Posterior vena cava (tissue), 2 donors: ENCODE measurements at regions of chr11 and their contacts with region 1.

Region 1: DNA sequence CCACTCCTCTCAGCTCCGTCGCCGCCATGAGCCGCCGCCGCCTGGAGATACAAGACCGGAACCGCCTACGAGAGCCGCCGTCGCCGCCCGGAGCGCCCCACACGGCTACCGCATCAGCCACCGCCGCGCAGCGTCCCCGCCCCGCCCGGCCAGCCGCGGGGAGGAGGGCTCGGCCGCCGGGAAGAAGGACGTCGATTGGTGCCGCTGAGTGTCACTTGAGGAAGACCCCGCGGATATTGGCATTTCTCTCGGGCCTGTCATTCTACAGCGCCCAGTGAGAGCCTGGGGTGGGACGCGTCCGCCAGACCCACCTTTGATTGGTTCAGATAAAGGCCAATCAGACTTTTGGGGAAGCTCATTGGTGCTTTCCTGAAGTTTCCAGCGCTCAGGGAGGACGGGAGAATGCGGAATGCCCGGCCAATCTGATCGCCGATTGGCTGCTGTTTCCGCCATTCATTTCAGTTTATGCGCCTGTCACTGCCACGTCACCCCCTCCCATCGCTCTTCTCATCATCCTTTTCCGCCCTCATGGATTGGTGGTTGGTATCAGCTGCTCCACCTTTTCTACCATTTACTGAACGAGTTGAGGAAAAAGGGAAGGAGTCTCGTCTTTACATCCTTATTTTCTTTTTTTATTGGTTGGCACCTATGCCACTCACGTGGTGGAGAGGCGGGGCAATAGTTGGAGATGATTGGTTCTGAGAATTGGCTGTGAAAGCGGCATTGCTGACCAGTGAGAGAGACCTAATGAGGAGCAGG is at the start of gene OSBP:
- DNase-seq: peak; percentile 99
- total RNA-seq, gene OSBP: 29.7 to 35.7 TPM

Region 2: DNA sequence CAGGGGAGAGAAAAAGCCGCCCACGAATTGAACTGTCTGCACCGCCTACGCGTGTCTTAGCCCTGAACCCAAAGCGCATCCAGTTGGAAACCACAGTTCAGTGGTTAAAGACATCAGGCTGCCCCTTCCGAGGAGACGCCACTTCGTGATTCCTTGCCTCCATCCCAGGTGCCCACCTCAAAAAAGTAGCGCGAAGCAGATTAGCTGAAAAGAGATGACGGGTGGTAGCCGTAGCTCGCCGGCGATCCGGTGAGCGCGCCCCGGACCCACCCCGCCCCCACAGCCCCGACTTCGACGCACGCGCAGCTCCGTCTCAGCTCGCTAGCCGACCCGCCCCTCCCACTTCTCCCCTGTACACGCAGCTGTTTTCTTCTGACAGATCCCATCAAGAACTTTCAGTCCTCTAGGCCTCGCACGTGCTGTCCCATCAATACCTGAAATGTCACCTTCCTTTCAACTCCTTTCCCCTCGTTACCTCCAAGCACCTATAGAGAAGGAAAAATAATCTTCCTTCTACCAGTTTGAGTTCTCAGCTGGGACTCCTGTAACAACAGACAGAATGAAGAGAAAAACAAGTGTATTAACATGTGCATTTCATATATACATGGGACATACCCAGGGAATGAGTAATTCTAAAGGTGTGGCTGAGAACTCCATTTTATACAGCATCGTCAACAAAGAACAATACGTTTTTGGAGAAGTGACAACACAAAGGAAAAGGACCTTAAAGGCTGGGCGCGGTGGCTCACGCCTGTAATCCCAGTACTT is 54.9 kb before region 1 on chr11:
- intact Hi-C with region 1: loop called in 1 of 2 experiments (anchors 10 kb)
- DNase-seq: peak; percentile 94

Region 3: DNA sequence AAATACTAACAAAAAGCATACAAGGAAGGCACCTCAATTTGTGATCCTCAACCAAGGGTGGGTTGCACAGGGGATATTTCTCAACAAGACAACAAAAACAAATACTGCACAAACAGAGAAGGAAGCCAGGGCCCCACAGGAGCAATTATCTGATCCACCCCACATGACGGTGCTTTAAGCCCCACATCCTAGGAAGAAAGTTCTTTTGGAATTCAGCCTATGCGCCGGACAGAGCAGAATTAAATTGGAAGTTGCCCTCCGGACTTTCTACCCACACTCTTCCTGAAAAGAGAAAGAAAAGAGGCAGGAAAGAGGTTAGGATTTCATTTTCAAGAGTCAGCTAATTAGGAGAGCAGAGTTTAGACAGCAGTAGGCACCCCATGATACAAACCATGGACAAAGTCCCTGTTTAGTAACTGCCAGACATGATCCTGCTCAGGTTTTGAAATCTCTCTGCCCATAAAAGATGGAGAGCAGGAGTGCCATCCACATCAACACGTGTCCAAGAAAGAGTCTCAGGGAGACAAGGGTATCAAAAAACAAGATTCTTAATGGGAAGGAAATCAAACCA is 40.8 kb before region 1 on chr11:
- intact Hi-C with region 1: loop called in 1 of 2 experiments (anchors 2 kb)
- DNase-seq: no peak

Region 4: GRCh38 chr11:60710482-60710881 is 1094.7 kb after region 1 on chr11:
- intact Hi-C with region 1: no loop called
- DNase-seq: no peak

Region 5: DNA sequence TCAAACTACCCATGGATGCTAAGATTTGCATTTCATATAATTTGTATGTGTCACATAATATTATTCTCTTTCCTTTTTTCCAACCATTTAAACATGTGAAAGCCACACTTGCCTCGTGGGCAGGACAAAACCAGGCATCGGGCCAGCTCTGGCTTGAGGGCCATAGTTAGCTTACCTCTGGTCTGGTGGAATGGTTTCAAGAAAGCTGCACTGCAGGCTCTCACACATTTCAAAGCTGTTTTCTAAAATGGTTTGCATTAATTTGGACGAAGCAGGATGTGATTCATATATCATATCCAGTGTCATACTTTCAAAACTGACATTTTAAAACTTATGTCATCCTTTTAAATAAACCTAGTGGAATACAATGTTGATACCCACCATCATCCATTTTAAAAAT is 1421.9 kb after region 1 on chr11:
- intact Hi-C with region 1: no loop called
- DNase-seq: peak; percentile 61